Caco-2 (cell line): ENCODE measurements at regions of chr12 and their contacts with region 1.

Region 1: GRCh38 chr12:11264506-11264905 is 5.0 kb downstream of the PRB3 start:
- DNase-seq: no peak
- H3K4me3 ChIP-seq: no peak overlapping the region
- H3K4me3 Mint-ChIP-seq: no peak overlapping the region
- H3K27ac Mint-ChIP-seq: no peak overlapping the region
- H3K4me1 ChIP-seq: no peaks in the 10 kb centered on the region
- H3K4me1 Mint-ChIP-seq: no peaks in the 10 kb centered on the region
- H3K27me3 ChIP-seq: no peaks in the 10 kb centered on the region; the same call in 1 of the 2 replicates
- H3K27me3 Mint-ChIP-seq: peaks cover 18% of the 10 kb centered on the region
- CTCF ChIP-seq: no peak

Region 2: DNA sequence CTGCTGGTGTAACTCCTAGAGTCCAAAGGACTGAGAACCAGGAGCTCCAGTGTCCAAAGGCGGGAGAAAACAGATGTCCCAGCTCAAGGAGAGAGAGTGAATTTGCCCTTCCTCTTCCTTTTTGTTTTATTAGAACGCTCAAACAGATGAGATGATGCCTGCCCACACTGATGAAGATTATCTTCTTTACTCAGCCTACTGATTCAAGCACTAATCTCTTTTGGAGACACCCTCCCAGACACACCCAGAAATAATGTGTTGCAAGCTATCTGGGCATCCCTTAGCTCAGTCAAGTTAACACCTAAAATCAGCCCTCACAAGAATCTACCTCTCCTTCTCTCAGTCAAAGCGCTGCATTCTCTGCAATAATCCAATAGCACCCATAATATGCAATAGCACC is 728.0 kb after region 1 on chr12:
- CTCF ChIA-PET with region 1: interaction called, 10 read pairs
- POLR2A ChIA-PET with region 1: no interaction called
- intact Hi-C with region 1: no loop called
- DNase-seq: no peak
- H3K4me3 ChIP-seq: no peak overlapping the region
- H3K4me3 Mint-ChIP-seq: no peak overlapping the region
- H3K27ac Mint-ChIP-seq: no peak overlapping the region
- H3K4me1 ChIP-seq: no peaks in the 10 kb centered on the region
- H3K4me1 Mint-ChIP-seq: no peaks in the 10 kb centered on the region
- H3K27me3 ChIP-seq: no peaks in the 10 kb centered on the region; the same call in 1 of the 2 replicates
- H3K27me3 Mint-ChIP-seq: peaks cover 2% of the 10 kb centered on the region
- CTCF ChIP-seq: no peak